Pancreas (tissue), 10 donors: ENCODE measurements at regions of chr10 and their contacts with region 1.

Region 1: GRCh38 chr10:124388823-124389612 is 29.7 kb downstream of the OAT start:
- DNase-seq: peak; percentile 80 to 99 (median 94)
- ATAC-seq: peak; percentile 99 to 100 (median 99)
- H3K4me3 ChIP-seq: peak overlapping the region; percentile 14 to 63 (median 32)
- H3K27ac ChIP-seq: no peak overlapping the region
- H3K4me1 ChIP-seq: no peaks in the 10 kb centered on the region
- H3K27me3 ChIP-seq: no peaks in the 10 kb centered on the region
- CTCF ChIP-seq: peak; percentile 97 to 99 (median 98)

Region 2: DNA sequence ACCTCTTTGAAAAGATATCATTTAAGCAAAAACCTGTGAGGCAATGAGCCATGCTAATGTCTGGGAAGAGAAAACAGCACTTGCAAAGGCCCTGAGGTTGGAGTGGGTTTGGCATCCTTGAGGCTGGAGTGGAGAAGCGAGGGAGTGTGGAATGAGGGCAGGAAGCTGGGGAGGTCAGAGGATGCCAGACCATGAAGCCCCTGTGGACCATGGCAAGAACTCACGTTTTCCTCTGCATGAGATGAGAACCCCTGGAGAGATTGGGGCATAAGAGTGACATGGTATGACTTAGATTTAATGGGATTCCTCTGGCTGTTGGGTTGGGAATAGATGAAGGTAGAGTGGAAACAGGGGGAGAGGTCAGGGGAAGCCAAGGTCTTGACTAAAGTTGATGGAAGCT is 673.5 kb before region 1 on chr10:
- intact Hi-C with region 1: no loop called
- DNase-seq: no peak
- ATAC-seq: no peak
- H3K4me3 ChIP-seq: no peak overlapping the region
- H3K27ac ChIP-seq: no peak overlapping the region
- H3K4me1 ChIP-seq: no peaks in the 10 kb centered on the region
- H3K27me3 ChIP-seq: no peaks in the 10 kb centered on the region
- CTCF ChIP-seq: no peak

Region 3: DNA sequence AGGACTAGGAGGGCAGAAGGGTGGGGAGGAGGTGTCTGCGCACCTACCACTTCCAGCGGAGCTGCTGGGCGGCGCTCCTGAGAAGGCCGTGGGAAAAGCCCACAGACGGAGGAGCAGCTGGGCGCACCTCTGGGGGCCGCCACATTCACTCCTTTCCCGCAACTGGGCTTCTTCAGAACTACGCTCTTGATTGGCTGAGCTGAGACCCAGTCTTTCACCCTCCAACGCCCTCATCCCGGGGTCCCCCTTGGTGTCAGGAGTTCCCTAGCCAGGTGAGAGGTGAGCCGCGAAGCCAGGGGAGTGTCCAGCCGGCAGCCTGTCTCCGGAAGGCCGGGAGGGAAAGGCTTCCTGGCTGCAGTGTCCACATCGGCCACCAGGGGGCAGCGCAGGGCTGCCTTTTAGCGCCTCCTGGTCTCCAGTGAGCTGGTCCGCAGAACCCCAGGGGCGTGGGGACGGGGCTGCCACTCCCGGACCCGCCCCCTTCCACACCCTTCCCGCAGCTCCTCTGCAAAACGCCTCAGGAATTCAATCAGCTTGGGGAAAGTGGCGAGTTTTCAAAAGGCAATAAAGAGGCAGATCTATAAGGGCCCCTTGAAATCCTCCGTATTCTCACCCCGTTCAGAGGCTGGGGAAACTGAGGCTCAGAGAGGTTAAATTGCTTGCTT is 394.5 kb before region 1 on chr10:
- intact Hi-C with region 1: loop called in 1 of 3 experiments (anchors 5 kb)
- DNase-seq: peak; percentile 71 to 99 (median 88)
- ATAC-seq: peak; percentile 89 to 93 (median 90)
- H3K4me3 ChIP-seq: peak overlapping the region in 1 of 4 donors; percentile 23
- H3K27ac ChIP-seq: no peak overlapping the region
- H3K4me1 ChIP-seq: peaks cover 0 to 13% (median 0%) of the 10 kb centered on the region in 3 donors
- H3K27me3 ChIP-seq: peaks cover 0 to 21% (median 3%) of the 10 kb centered on the region in 4 donors
- CTCF ChIP-seq: peak; percentile 99 to 100 (median 100)

Region 4: GRCh38 chr10:124000792-124001201 is 388.2 kb before region 1 on chr10:
- intact Hi-C with region 1: loop called (anchors 5 to 10 kb)
- DNase-seq: peak in 1 of 6 donors; percentile 7
- ATAC-seq: no peak
- H3K4me3 ChIP-seq: no peak overlapping the region
- H3K27ac ChIP-seq: no peak overlapping the region
- H3K4me1 ChIP-seq: no peaks in the 10 kb centered on the region
- H3K27me3 ChIP-seq: no peaks in the 10 kb centered on the region
- CTCF ChIP-seq: no peak

Region 5: DNA sequence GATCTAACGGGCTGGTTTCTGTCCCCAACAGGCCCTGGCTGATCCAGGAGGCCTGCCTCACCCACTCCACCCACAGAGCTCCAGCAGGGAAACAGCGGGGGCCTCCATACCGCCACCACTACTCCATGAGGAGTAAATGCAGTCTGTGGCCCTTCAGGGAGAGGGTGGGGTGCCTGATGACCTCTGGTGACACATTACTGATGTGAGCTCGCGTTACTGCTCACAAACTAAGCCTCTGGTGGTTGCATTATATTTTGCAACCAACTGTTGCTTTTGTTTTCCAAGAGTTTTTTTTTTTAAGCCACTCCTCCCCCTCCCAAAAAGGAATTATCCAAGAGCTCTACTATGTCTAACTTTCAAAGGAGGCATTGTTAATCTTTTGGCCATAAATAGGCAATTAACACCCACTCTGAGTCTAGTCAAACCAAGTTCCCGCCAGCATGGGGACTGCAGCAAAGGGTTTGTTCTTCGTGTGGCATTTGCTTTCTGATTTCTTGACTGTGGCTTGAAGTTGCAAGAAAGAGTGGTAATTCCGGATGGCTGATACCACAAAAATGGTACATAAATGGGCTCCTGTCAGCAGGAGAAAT is 282.6 kb after region 1 on chr10:
- intact Hi-C with region 1: no loop called
- DNase-seq: peak in 2 of 6 donors; percentile 13 to 17
- ATAC-seq: peak in 3 of 4 donors; percentile 20 to 40 (median 31)
- H3K4me3 ChIP-seq: no peak overlapping the region
- H3K27ac ChIP-seq: no peak overlapping the region
- H3K4me1 ChIP-seq: no peaks in the 10 kb centered on the region
- H3K27me3 ChIP-seq: no peaks in the 10 kb centered on the region
- CTCF ChIP-seq: no peak